ENCODE measurements at regions of chr2 and their contacts with region 1.

Region 1: DNA sequence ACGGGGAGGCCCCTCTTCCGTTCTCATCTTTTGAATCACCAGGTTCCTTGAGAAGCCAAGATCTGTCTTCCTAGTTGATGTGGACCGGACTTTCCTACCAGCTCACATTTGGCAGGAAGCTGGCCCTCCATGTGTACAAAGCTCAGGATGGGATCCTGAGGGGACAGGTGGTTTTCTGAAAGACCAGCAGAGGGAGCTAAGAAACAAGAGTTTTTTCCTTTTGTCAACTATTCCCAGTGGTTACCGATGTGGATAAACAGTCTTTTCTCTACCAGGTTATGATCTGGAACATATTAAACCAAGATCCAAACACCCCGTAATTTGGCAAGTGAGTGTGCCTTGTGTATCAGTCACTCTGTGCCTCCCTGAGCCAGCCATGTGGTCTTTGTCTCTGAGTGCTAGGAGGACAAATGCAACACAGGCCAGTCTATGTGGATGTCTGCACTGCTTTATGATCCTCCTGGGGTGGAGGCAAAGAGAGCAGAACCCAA is 25.1 kb upstream of the ARHGAP25 start:
- DNase-seq: peak; percentile 34
- H3K4me3 Mint-ChIP-seq: no peak overlapping the region
- H3K27ac Mint-ChIP-seq: no peak overlapping the region
- H3K4me1 Mint-ChIP-seq: peaks cover 20% of the 10 kb centered on the region
- H3K27me3 Mint-ChIP-seq: no peaks in the 10 kb centered on the region

Region 2: GRCh38 chr2:68689553-68690537 is 19.6 kb before region 1 on chr2:
- CTCF ChIA-PET with region 1: interaction called, 13 read pairs
- intact Hi-C with region 1: no loop called
- DNase-seq: peak; percentile 31
- H3K4me3 Mint-ChIP-seq: no peak overlapping the region
- H3K27ac Mint-ChIP-seq: peak overlapping the region; percentile 52
- H3K4me1 Mint-ChIP-seq: peaks cover 21% of the 10 kb centered on the region
- H3K27me3 Mint-ChIP-seq: no peaks in the 10 kb centered on the region

Region 3: DNA sequence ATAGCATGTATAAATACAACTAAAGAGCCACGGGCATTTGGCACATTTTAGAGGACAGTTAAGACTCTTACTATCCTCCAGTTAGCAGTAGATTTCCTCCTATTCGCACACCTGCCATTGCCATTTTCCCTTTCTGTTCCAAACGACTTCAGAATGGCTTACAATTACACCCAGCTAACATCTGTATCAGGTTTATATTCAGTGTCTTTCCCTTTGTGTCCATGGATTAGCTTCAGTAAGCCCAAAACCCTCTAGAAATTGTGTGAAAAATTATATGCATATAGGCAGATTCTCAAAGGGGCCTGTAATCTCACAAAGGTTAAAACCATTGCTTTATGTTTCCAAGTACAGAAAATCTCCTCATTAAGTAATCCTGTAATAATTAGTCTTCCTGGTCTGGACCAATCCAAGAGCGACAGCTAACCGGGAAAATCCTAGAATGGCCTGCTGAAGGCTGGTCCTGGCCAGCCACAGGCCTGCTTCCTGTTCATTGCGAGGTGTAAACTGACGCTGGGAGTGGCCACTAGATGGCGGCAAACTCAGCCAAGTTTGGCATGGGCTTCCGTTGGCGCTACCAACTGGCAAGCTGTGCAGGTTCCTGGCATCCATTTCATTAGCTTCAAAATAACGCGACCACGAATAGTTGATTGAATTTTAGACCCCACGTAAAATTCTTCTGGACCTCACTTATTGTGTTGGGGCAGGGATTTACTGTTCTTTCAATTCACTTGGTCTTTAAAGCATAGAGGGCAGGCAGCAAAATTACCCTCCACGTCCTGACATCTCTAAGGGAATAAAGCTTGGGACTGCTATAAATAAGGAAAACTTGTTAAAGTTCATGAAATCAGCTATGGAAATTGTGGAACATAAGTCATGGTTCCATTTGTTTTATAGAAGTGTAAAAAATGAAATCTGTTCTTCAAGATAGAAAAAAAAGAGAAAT is 42.2 kb after region 1 on chr2:
- CTCF ChIA-PET with region 1: interaction called, 43 read pairs
- intact Hi-C with region 1: loop called (anchors 1 kb)
- DNase-seq: peak; percentile 98
- H3K4me3 Mint-ChIP-seq: peak overlapping the region; percentile 28
- H3K27ac Mint-ChIP-seq: peak overlapping the region; percentile 93
- H3K4me1 Mint-ChIP-seq: peaks cover 87% of the 10 kb centered on the region
- H3K27me3 Mint-ChIP-seq: no peaks in the 10 kb centered on the region

Region 4: DNA sequence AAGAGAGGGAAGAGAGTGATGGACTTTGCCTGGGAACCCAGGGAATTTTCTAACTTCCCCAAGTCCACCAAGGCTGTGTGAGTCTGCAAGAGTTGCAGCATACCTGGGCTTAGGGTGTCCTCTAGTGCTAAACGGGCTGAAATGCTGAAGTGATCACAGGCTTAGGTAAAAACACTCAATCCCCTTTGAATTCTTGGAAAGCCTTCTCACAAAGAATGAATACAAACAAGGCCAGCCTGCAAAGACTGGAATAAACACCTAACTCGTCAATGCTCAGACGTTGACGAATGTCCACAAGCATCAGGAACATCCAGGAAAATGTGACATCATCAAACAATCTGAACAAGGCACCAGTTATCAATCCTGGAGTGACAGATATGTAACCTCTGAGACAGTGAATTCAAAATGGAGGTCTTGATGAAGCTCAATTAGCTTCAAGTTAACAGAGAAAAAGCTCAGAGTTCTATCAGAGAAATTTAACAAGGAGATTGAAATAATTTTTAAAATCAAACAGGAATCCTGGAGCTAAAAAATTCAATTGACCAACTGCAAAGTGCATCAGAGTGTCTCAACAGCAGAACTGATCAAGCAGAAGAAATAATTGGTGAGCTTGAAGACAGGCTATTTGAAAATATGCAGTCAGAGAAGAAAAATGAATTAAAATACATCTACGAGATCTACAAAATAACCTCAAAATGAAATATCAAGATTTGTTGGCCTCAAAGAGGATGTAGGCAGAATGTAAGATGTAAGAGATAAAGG is 191.9 kb after region 1 on chr2:
- CTCF ChIA-PET with region 1: interaction called, 61 read pairs
- intact Hi-C with region 1: no loop called
- DNase-seq: peak; percentile 19
- H3K4me3 Mint-ChIP-seq: no peak overlapping the region
- H3K27ac Mint-ChIP-seq: no peak overlapping the region
- H3K4me1 Mint-ChIP-seq: no peaks in the 10 kb centered on the region
- H3K27me3 Mint-ChIP-seq: no peaks in the 10 kb centered on the region

Region 5: GRCh38 chr2:68925295-68925896 is 215.9 kb after region 1 on chr2:
- CTCF ChIA-PET with region 1: interaction called, 71 read pairs
- intact Hi-C with region 1: loop called (anchors 1 kb)
- DNase-seq: peak; percentile 76
- H3K4me3 Mint-ChIP-seq: no peak overlapping the region
- H3K27ac Mint-ChIP-seq: no peak overlapping the region
- H3K4me1 Mint-ChIP-seq: no peaks in the 10 kb centered on the region
- H3K27me3 Mint-ChIP-seq: peaks cover 4% of the 10 kb centered on the region

Region 6: DNA sequence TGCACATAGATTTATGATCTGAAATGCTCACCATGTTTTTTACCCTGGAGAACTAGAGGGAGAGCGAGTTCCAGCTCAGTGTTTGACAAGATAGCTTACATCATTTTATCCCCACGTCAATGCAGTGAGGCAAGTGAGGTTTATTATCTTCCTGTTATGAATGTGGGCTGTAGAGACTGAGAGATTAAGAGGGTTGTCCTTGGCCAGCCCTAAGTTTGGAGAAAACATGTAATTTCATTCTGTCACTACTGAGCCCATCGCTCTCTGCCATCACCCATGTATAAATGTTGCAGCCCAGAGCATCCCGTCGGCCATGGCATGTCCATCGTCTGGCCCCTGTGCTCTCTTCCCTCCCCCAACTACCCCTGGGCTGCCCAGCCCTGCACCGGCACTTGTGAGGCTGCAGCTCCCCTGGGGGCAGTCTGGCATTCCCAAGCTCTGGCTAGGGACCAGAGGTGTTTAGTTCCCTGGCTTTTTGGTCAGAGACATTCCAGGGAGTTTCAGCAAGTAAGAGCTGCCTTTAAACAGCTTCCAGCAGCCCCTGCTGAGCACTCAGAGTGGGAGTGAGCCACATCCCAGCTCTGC is 440.3 kb after region 1 on chr2:
- CTCF ChIA-PET with region 1: no interaction called
- intact Hi-C with region 1: no loop called
- DNase-seq: no peak
- H3K4me3 Mint-ChIP-seq: no peak overlapping the region
- H3K27ac Mint-ChIP-seq: no peak overlapping the region
- H3K4me1 Mint-ChIP-seq: no peaks in the 10 kb centered on the region
- H3K27me3 Mint-ChIP-seq: peaks cover 4% of the 10 kb centered on the region